ENCODE measurements at regions of chr10 and their contacts with region 1.

Region 1: DNA sequence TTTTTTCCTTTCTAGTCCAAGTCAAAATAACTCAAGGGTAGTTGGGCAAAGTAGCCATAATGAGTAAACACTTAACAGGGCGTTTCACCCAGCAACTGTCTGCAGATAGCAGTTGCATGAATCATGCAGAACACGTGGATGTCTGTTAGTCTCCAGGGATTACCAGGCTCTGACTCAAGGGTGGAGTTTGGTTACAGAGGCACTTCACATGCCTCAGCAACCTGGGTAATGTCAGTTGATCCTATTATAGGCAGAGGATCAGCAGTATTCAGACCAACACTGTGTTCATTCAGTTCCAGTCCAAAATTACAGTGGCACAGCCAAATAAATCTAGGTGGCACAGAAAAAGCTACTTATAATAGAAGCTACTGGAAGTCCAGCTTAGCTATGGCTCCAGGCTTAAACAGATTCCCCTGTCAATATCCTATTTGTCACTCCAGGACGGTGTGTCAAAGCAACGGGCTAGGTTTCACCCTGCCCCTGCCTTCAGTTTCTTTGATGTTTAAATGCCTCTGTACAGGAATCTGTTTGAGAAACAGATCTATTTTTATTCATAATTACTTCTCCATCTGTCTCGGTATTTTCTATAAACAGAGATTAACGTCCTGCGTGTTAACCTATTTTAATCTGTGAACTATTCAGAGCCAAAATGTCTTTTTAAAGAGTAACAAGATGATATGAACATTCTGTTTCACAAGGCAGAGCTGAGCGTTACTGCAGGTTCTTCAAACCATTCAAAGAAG is 162.7 kb upstream of the AKR1E2 start:
- DNase-seq: peak in 1 of 2 donors; percentile 67
- ATAC-seq: peak; percentile 93
- H3K4me3 ChIP-seq: peak overlapping the region in 1 of 2 donors; percentile 10
- H3K27ac ChIP-seq: peak overlapping the region; percentile 89 to 95
- H3K4me1 ChIP-seq: peaks cover 0 to 7% of the 10 kb centered on the region in 2 donors
- H3K27me3 ChIP-seq: no peaks in the 10 kb centered on the region

Region 2: GRCh38 chr10:3197348-3198003 is 1465.9 kb before region 1 on chr10:
- intact Hi-C with region 1: loop called in 1 of 2 experiments (anchors 5 kb)
- DNase-seq: peak; percentile 87 to 94
- ATAC-seq: peak; percentile 94
- H3K4me3 ChIP-seq: no peak overlapping the region
- H3K27ac ChIP-seq: peak overlapping the region in 1 of 2 donors; percentile 22
- H3K4me1 ChIP-seq: no peaks in the 10 kb centered on the region
- H3K27me3 ChIP-seq: no peaks in the 10 kb centered on the region

Region 3: DNA sequence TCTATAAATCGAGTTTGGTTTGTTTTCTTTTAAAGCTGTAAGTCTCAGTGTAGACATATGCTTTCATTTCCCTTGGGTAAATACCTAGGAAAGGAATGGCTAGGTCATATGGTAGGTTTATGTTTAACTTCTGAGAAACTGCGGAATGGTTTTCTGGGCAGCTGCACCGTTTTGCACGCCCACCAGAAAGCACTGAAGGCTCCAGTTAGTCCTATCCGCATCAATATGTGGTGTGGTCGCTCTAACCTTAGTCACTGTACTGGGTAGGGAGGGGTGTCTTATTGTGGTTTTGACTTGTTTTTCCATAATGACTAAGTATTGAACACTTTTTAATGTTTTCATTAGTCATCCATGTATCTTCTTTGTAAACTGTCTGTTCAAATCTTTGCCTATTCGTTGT is 116.8 kb before region 1 on chr10:
- intact Hi-C with region 1: loop called in 1 of 2 experiments (anchors 5 kb)
- DNase-seq: no peak
- ATAC-seq: no peak
- H3K4me3 ChIP-seq: no peak overlapping the region
- H3K27ac ChIP-seq: no peak overlapping the region
- H3K4me1 ChIP-seq: no peaks in the 10 kb centered on the region
- H3K27me3 ChIP-seq: no peaks in the 10 kb centered on the region

Region 4: DNA sequence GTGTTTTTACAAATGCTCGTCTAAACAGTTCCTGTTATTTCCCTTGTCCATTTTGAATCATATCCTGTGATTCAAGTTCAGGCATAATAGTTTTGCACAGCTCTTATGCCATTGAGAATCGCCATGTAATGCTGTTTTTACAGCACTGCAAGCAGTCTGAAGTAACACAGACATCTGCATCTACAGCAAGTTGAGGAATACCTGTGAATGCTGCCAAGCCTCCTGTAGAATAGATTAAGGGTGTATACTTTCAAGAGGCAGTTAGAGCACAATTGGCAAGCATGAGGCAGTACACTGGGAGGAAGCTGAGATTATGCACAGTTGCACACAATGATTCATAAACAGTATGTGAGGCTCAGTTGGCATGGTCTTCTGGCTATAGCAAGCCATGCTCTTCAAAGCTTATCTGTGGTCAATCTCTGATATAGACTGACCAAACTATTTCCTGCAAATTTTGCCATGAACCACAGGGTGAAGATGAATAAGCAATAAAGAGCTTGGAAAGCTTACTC is 40.8 kb after region 1 on chr10:
- intact Hi-C with region 1: no loop called
- DNase-seq: no peak
- ATAC-seq: peak; percentile 50
- H3K4me3 ChIP-seq: no peak overlapping the region
- H3K27ac ChIP-seq: no peak overlapping the region
- H3K4me1 ChIP-seq: no peaks in the 10 kb centered on the region
- H3K27me3 ChIP-seq: no peaks in the 10 kb centered on the region

Measured in aorta (tissue), 5 donors.